A673 (cell line): ENCODE measurements at regions of chr10 and their contacts with region 1.

Region 1: DNA sequence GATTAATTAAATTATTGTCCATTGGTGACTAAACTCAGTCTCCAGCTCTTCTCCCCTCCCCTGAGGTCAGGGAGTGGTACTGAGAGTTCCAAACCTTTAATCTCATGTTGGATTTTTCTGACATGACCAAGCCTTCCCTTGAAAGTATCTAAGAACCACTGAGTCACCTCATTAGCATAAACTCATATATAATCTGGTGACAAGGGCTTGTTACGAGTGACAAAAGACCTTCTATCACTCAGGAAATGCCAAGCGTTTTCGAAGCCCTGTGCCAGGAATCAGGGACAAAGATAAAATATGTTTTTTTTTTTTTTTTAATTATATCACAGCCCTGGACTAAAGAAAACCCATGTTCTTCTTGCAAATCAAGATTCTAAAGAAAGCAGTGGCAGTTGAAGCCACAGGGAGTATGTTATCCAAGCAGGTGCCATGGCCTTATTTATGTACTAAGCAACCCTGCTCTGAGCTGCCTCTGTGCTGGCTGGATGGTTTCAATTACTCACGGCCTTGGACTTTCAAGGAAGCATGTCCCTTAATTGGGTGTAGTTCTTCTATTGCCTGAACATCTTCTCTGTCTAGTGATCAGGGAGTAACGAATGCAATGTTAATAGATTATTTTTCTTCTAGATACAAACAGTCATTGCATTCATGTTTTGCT is 169.0 kb upstream of the PRKCQ start:
- DNase-seq: peak; percentile 96
- H3K4me3 ChIP-seq: no peak overlapping the region
- H3K27ac ChIP-seq: peak overlapping the region; percentile 85
- H3K4me1 ChIP-seq: peaks cover 52% of the 10 kb centered on the region
- H3K27me3 ChIP-seq: no peaks in the 10 kb centered on the region
- CTCF ChIP-seq: no peak

Region 2: GRCh38 chr10:6395606-6396005 is 353.5 kb before region 1 on chr10:
- CTCF ChIA-PET with region 1: no interaction called
- POLR2A ChIA-PET with region 1: interaction called, 12 read pairs
- intact Hi-C with region 1: no loop called
- DNase-seq: no peak
- H3K4me3 ChIP-seq: no peak overlapping the region
- H3K27ac ChIP-seq: no peak overlapping the region
- H3K4me1 ChIP-seq: no peaks in the 10 kb centered on the region
- H3K27me3 ChIP-seq: no peaks in the 10 kb centered on the region
- CTCF ChIP-seq: no peak

Region 3: GRCh38 chr10:7251696-7252465 is 502.8 kb after region 1 on chr10:
- CTCF ChIA-PET with region 1: no interaction called
- POLR2A ChIA-PET with region 1: no interaction called
- intact Hi-C with region 1: no loop called
- DNase-seq: no peak
- H3K4me3 ChIP-seq: no peak overlapping the region
- H3K27ac ChIP-seq: no peak overlapping the region
- H3K4me1 ChIP-seq: no peaks in the 10 kb centered on the region
- H3K27me3 ChIP-seq: peaks cover 24% of the 10 kb centered on the region
- CTCF ChIP-seq: no peak